ENCODE measurements at regions of chr14 and their contacts with region 1.

Region 1: GRCh38 chr14:54566410-54567223 is at the start of gene SAMD4A:
- DNase-seq: peak; percentile 88 to 91
- H3K4me3 ChIP-seq: peak within 1 kb of the TSS; percentile 69
- H3K4me1 ChIP-seq: peaks cover 13% of the 10 kb centered on the region
- H3K27me3 ChIP-seq: no peaks in the 10 kb centered on the region

Region 2: GRCh38 chr14:54291491-54292191 is 275.0 kb before region 1 on chr14:
- in situ Hi-C with region 1: no loop called
- DNase-seq: no peak
- H3K4me3 ChIP-seq: no peak overlapping the region
- H3K4me1 ChIP-seq: no peaks in the 10 kb centered on the region
- H3K27me3 ChIP-seq: peaks cover 7% of the 10 kb centered on the region; the same call in 1 of the 2 replicates

Region 3: GRCh38 chr14:54691525-54692283 is 125.1 kb after region 1 on chr14:
- in situ Hi-C with region 1: loop called (anchors 5 kb)
- DNase-seq: peak; percentile 64 to 83
- H3K4me3 ChIP-seq: no peak overlapping the region
- H3K4me1 ChIP-seq: peaks cover 2% of the 10 kb centered on the region; the same call in 1 of the 2 replicates
- H3K27me3 ChIP-seq: no peaks in the 10 kb centered on the region

Region 4: DNA sequence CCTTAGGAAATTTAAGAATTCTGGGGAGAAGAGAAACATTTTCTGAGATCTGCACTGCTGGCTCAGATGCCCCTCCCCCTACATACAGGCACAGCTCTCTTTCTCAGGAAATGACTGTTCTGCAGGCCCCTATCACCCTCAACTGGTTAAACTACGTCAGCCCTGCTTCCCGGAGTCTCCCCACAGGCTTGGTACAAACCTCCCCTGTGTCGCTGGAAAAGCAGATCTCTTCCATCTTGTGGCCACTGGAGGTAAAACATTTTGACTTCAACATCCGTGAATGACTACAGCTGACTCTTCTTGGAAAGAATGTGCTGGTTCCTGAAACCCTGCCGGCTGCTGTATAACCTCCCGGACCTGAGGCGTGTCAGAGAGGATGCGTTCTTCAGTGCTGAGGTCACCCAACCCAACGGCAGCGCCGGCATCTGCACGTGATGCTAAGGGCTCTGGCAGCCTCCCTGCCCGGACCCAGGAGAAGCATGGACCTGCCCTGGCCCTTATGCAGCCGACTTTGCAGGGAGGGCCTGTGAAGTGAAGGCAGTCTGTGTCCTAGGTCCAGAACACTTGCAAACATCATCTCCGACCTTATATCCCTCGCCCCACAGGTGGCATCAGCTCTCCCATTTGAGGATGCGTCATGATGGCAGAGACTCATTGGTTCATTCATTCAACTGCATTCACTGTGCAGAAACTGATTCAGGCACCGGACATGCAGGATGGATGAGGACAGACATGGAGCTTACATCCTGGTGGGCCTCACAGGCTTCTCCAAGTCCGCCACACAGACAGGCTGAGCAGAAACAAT is 206.8 kb after region 1 on chr14:
- in situ Hi-C with region 1: loop called (anchors 10 kb)
- DNase-seq: peak; percentile 80 to 84
- H3K4me3 ChIP-seq: no peak overlapping the region
- H3K4me1 ChIP-seq: peaks cover 10% of the 10 kb centered on the region
- H3K27me3 ChIP-seq: no peaks in the 10 kb centered on the region

Measured in HAP-1 (cell line).